ENCODE measurements at regions of chr3 and their contacts with region 1.

Region 1: DNA sequence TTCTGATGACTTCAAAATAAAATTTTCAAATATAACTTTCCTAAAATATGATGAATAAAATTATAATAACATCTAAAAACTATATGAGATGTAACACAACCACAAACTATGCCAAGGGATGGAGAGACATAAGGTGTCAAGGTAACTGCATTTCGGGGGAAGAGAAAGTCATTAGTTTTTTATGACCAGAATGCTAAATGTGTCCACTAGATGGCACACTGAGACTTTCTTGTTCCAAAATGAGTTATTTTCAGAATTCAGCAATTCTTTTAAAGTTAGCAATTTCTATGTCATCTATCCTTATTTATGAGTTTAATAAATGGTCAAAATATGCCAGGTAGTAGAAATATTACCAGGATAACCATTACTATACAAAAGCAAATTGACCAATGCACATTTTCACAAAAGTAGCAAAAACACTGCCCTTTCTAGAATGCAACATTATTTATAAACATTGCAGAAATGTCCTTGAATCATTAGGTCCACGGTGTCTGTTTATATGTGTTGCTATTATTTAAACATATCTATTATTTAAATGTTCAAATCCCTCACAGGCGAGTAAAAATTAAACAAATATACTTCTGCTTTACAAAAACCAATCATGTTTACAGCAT is 374.2 kb downstream of the PLCL2 start:
- DNase-seq: no peak
- ATAC-seq: no peak
- H3K4me3 ChIP-seq: no peak overlapping the region
- H3K27ac ChIP-seq: no peak overlapping the region
- H3K4me1 ChIP-seq: no peaks in the 10 kb centered on the region
- H3K27me3 ChIP-seq: no peaks in the 10 kb centered on the region

Region 2: DNA sequence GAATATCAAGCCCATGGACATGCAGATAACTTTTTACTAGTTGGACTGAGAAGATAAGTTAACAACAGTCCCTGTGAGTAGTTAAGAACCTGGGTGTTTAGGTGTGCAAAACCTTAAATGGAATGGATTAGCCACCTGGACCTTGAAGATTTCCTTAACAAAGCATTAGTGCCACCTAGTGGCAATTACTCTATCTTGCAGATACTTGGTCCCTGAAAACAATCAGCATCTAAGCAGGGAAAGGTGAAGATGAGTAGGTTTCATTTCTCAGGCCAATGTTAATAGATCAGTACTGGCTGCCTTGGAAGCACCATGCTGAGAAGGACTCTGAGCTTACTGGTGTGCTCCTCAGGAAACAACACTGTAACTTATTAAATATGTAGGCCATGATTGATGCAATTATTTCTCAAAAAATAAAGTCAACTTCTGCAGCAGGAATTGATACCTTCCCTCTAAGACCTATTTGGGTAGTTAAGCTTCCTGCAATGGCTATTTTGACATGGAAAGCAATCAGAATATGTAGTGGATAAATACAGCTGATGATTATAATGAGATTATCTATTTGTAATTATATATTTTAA is 154.1 kb after region 1 on chr3:
- intact Hi-C with region 1: loop called in 3 of 4 experiments (anchors 5 to 10 kb)
- DNase-seq: no peak
- ATAC-seq: peak in 1 of 2 donors; percentile 45
- H3K4me3 ChIP-seq: no peak overlapping the region
- H3K27ac ChIP-seq: no peak overlapping the region
- H3K4me1 ChIP-seq: no peaks in the 10 kb centered on the region
- H3K27me3 ChIP-seq: no peaks in the 10 kb centered on the region

Measured in right cardiac atrium (tissue), 5 donors.